CD4-positive, alpha-beta T cell (primary cell): ENCODE measurements at regions of chr6 and their contacts with region 1.

Region 1: DNA sequence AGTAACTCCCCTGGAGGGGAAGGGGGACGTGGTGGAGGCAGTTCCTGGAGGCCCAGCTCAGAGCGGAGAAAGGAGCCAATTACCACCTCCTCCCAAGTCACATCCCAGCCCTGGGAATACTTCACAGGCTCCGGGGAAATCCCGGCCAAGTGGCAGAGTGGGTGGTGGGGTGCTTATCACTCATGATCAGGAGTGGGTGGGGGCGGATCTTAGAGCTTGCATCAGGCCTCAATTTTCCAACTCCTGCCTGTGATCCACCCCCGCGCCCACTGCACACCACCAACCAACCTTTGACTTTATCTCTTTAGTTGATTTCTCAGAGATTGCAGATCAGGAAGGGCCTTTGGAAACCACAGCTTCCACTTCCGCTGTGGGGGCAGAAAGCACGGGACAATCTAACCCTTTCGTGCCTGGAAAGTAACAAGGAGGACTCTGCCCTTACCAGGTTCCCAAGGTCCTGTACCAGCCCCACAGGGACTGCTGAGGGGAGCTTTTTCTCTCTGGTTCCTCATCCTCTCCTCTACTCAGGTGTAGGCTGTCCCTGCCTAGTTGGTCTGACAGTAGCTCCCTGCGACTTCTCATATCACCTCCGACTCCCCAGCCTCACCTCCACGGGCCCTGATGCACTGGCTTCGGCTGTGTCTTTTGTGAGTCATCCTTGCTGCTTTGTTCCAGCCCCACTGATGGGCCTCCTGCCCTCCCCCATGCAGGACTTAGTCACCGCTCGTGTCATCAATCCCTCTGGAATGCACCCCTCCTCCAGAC is 24.9 kb upstream of the IER3 start:
- DNase-seq: peak; percentile 29 to 83 (median 62)
- ATAC-seq: peak; percentile 86
- H3K4me3 ChIP-seq: peak overlapping the region; percentile 5
- H3K4me3 Mint-ChIP-seq: peak overlapping the region; percentile 79
- H3K27ac ChIP-seq: no peak overlapping the region
- H3K27ac Mint-ChIP-seq: peak overlapping the region; percentile 52
- H3K4me1 ChIP-seq: peaks cover 40% of the 10 kb centered on the region
- H3K4me1 Mint-ChIP-seq: peaks cover 76% of the 10 kb centered on the region
- H3K27me3 ChIP-seq: no peaks in the 10 kb centered on the region
- H3K27me3 Mint-ChIP-seq: no peaks in the 10 kb centered on the region
- CTCF ChIP-seq: no peak

Region 2: GRCh38 chr6:30787954-30788353 is 18.7 kb after region 1 on chr6:
- CTCF ChIA-PET with region 1: no interaction called
- POLR2A ChIA-PET with region 1: interaction called, 24 read pairs
- intact Hi-C with region 1: no loop called
- DNase-seq: peak in 2 of 14 experiments; percentile 32 to 50
- ATAC-seq: peak; percentile 49
- H3K4me3 ChIP-seq: no peak overlapping the region
- H3K4me3 Mint-ChIP-seq: peak overlapping the region; percentile 8
- H3K27ac ChIP-seq: no peak overlapping the region
- H3K27ac Mint-ChIP-seq: peak overlapping the region; percentile 61
- H3K4me1 ChIP-seq: peaks cover 46% of the 10 kb centered on the region
- H3K4me1 Mint-ChIP-seq: peaks cover 66% of the 10 kb centered on the region
- H3K27me3 ChIP-seq: no peaks in the 10 kb centered on the region
- H3K27me3 Mint-ChIP-seq: no peaks in the 10 kb centered on the region
- CTCF ChIP-seq: no peak

Region 3: DNA sequence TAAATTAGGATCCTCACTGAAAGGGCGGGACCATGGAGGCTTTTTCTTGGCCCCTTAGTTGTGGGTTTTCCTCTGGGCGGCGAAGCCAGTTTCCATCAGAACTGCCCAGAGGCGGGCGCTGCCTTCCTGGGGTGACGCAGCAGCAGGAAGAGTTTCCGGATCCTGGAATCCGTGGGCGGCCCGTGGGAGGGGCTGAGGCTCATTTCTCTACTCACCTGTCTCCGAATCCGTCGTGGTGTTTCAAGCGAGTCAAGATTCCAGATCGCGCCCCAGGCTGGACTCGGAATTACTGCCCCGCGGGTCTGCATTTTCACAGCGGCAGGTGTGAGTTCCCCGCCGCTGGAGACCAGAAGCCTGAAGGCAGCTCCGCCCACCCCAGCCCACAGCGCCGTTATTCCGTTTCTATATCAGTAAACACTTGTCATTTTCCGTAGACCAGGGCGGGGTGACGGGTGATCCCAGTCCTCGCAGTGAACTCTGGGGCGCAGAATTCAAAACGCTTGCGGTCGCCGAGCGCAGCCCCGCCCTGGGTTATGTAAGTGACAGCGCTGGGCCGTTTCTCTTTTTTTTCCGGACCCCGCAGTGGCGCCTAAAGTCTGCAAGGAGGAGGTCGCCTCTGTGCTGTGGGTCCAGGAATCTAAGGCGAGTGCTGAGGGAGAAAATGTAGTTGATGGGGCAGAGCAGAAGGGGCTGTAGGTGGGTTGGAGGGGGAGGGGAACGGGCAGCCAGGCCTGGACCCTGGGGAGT is 428.5 kb after region 1 on chr6:
- CTCF ChIA-PET with region 1: no interaction called
- POLR2A ChIA-PET with region 1: no interaction called
- intact Hi-C with region 1: no loop called
- DNase-seq: peak; percentile 91 to 98 (median 92)
- ATAC-seq: peak; percentile 76
- H3K4me3 ChIP-seq: peak overlapping the region; percentile 71
- H3K4me3 Mint-ChIP-seq: peak overlapping the region; percentile 97
- H3K27ac ChIP-seq: peak overlapping the region; percentile 97 to 100
- H3K27ac Mint-ChIP-seq: peak overlapping the region; percentile 93
- H3K4me1 ChIP-seq: peaks cover 60% of the 10 kb centered on the region
- H3K4me1 Mint-ChIP-seq: peaks cover 65% of the 10 kb centered on the region
- H3K27me3 ChIP-seq: no peaks in the 10 kb centered on the region
- H3K27me3 Mint-ChIP-seq: no peaks in the 10 kb centered on the region
- CTCF ChIP-seq: no peak